Mammary epithelial cell (primary cell): ENCODE measurements at regions of chr12 and their contacts with region 1.

Region 1: GRCh38 chr12:11202811-11203210 is 16.1 kb upstream of the TAS2R42 start:
- DNase-seq: no peak
- H3K4me3 ChIP-seq: no peak overlapping the region
- H3K27ac ChIP-seq: no peak overlapping the region
- H3K4me1 ChIP-seq: no peaks in the 10 kb centered on the region
- H3K27me3 ChIP-seq: no peaks in the 10 kb centered on the region
- CTCF ChIP-seq: no peak

Region 2: GRCh38 chr12:10867381-10867780 is 335.4 kb before region 1 on chr12:
- CTCF ChIA-PET with region 1: no interaction called
- dilution Hi-C with region 1: no loop called
- in situ Hi-C with region 1: no loop called
- intact Hi-C with region 1: loop called (anchors 1 kb)
- DNase-seq: no peak
- H3K4me3 ChIP-seq: no peak overlapping the region
- H3K27ac ChIP-seq: no peak overlapping the region
- H3K4me1 ChIP-seq: no peaks in the 10 kb centered on the region
- H3K27me3 ChIP-seq: no peaks in the 10 kb centered on the region
- CTCF ChIP-seq: peak; percentile 15 to 37

Region 3: DNA sequence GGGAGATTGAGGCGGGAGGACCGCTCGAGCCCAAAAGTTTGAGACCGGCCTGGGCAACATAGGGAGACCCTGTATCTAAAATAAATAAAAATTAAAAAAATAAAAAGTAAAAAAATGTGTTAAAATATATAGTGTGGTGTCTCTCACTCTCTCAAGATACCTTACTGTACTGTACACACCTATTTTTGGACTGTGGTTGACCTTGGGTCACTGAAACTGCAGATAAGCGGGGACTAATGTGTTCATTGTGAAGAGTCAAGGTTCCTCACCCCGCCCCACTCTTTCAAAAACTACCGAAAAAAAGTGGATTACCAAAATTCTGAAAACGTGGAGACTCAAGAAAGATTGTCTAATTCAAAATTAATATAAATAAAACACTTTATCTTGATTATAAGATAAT is 292.4 kb before region 1 on chr12:
- CTCF ChIA-PET with region 1: no interaction called
- dilution Hi-C with region 1: no loop called
- in situ Hi-C with region 1: no loop called
- intact Hi-C with region 1: no loop called
- DNase-seq: no peak
- H3K4me3 ChIP-seq: no peak overlapping the region
- H3K27ac ChIP-seq: no peak overlapping the region
- H3K4me1 ChIP-seq: no peaks in the 10 kb centered on the region
- H3K27me3 ChIP-seq: no peaks in the 10 kb centered on the region
- CTCF ChIP-seq: no peak

Region 4: GRCh38 chr12:11246489-11246888 is 43.7 kb after region 1 on chr12:
- CTCF ChIA-PET with region 1: no interaction called
- dilution Hi-C with region 1: no loop called
- in situ Hi-C with region 1: no loop called
- intact Hi-C with region 1: no loop called
- DNase-seq: no peak
- H3K4me3 ChIP-seq: no peak overlapping the region
- H3K27ac ChIP-seq: no peak overlapping the region
- H3K4me1 ChIP-seq: peaks cover 7% of the 10 kb centered on the region
- H3K27me3 ChIP-seq: no peaks in the 10 kb centered on the region
- CTCF ChIP-seq: no peak